Activated CD8-positive, alpha-beta memory T cell treated with anti-CD3 and anti-CD28 coated beads, Interleukin-2, amount 10 ng/mL, durations not matched to agents 7 days and 5 days (primary cell): ENCODE measurements at regions of chr4 and their contacts with region 1.

Region 1: GRCh38 chr4:674172-675035 is at the starts of genes ATP5ME and MYL5:
- DNase-seq: peak; percentile 98
- ATAC-seq: peak; percentile 94
- H3K4me3 Mint-ChIP-seq: peak within 1 kb of the TSS; percentile 82
- H3K27ac Mint-ChIP-seq: peak within 1 kb of the TSS; percentile 86
- H3K4me1 Mint-ChIP-seq: peaks cover 21% of the 10 kb centered on the region
- H3K27me3 Mint-ChIP-seq: no peaks in the 10 kb centered on the region
- total RNA-seq, gene ATP5ME: 213 to 231 TPM
- total RNA-seq, gene MYL5: 14.3 to 19.8 TPM

Region 2: DNA sequence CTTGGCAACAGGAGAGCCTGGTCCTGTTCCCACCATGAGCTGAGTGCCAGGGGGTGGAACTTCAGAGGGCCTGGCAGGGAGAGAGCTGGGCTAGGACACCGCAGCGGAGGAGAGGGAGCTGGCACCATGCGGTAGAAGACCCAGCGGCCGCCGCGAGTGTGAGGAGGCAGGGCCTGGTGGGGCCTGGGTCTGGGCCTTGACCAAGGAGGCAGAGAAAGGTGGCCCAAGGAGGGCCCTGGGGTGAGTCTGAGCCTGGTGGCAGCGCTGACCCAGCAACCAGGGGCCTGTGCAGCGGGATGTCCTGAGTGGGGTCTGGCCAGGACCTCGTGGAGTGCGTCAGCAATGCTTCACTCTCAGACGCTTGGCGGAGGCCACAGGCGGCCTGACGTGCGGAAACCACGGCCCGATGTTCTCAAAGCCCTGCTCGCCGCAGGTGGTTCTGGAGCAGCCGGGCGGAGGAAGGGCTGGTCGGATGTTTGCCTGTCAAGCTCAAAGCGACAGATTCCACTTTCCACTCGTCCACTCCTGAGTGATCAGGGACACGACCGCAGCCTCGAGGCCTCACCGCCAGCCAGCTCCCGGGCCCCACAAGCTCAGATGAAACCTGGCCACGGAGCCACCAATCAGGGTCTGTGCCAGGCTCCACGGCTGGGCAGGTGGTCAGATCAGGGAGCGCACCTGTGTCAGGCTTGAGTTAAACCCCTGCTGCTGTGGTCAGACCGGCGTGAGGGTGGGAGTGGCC is 21.2 kb before region 1 on chr4:
- CTCF ChIA-PET with region 1: no interaction called
- DNase-seq: no peak
- ATAC-seq: no peak
- H3K4me3 Mint-ChIP-seq: no peak overlapping the region
- H3K27ac Mint-ChIP-seq: no peak overlapping the region
- H3K4me1 Mint-ChIP-seq: no peaks in the 10 kb centered on the region
- H3K27me3 Mint-ChIP-seq: peaks cover 14% of the 10 kb centered on the region

Region 3: GRCh38 chr4:663438-664428 is 10.7 kb before region 1 on chr4:
- CTCF ChIA-PET with region 1: interaction called, 21 read pairs
- DNase-seq: peak; percentile 86
- ATAC-seq: peak; percentile 90
- H3K4me3 Mint-ChIP-seq: peak overlapping the region; percentile 79
- H3K27ac Mint-ChIP-seq: peak overlapping the region; percentile 91
- H3K4me1 Mint-ChIP-seq: peaks cover 9% of the 10 kb centered on the region
- H3K27me3 Mint-ChIP-seq: no peaks in the 10 kb centered on the region